Activated CD8-positive, alpha-beta T cell treated with anti-CD3 and anti-CD28 coated beads for 36 hours (primary cell): ENCODE measurements at regions of chr9 and their contacts with region 1.

Region 1: DNA sequence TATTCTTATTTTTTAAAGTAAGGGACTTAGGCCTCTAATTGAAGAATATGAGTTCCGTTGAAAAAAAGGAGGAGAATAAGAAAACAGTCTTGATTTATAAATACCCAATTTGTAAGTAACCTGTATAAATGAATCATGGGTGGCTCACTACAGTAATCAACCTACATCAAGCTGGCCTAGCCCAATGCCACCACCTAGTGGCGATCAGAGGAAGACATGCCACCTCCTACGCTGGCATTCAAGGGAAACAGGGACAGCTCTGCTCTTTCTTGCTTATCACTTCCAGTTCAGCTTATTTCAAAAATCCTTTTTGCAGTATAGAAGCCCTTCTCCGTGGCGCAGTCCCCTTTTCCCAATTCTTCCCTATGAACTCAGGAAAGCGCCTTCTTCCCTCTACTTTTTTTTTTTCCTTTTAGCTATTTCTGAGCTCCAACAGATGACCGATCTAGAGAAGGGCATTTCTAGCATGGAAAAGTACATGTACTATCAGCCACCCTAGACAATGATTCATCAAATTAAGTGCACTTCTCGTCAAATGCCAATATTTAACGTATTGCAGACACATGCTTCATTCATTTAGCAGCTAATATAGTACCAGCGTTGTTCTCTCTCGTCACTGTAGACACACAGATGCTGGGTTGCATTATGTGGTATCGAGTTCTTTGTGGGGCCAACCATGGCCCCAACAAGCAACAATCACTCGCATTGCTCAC is 28.3 kb downstream of the PTPN3 start:
- DNase-seq: peak; percentile 82
- ATAC-seq: peak; percentile 91
- H3K4me3 Mint-ChIP-seq: no peak overlapping the region
- H3K27ac Mint-ChIP-seq: no peak overlapping the region
- H3K4me1 Mint-ChIP-seq: peaks cover 9% of the 10 kb centered on the region
- H3K27me3 Mint-ChIP-seq: peaks cover 4% of the 10 kb centered on the region
- CTCF ChIP-seq: peak; percentile 82

Region 2: GRCh38 chr9:109440797-109441287 is 29.0 kb before region 1 on chr9:
- CTCF ChIA-PET with region 1: interaction called, 76 read pairs
- POLR2A ChIA-PET with region 1: no interaction called
- intact Hi-C with region 1: loop called (anchors 1 kb)
- DNase-seq: peak; percentile 77
- ATAC-seq: peak; percentile 99
- H3K4me3 Mint-ChIP-seq: no peak overlapping the region
- H3K27ac Mint-ChIP-seq: no peak overlapping the region
- H3K4me1 Mint-ChIP-seq: peaks cover 16% of the 10 kb centered on the region
- H3K27me3 Mint-ChIP-seq: peaks cover 22% of the 10 kb centered on the region
- CTCF ChIP-seq: peak; percentile 58

Region 3: DNA sequence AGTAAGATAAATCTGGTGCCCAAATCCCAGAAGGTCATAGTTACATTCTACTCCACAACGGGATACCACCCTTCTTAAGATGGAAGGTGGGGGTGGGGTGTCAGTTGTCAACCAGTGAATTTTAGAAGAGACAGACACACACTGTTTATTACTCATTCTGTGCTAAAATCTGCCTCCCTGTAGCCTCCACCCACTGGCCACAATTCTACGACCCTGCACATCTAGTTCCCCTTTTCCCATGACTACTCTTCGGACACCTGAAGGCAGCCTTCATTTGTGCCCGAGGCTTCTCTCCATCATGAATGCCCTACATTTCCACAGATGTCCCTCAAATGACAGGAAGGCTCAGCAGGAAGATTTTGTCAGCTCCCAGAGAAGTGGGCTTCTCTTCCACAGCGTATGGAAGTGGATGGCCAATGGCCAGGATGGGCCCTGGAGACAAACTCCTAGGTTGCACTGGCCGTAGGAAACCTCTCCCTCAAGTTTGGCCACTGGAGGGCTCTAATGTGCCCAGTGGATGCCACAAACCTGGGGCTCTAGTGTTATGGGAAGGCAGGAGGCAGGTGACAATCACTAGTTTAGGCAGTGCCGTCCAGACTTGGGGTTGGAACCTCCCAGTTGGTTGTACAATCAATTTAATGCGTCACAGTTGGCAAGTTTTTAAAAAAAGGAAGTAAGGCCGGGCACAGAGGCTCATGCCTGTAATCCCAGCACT is 18.3 kb before region 1 on chr9:
- CTCF ChIA-PET with region 1: interaction called, 33 read pairs
- POLR2A ChIA-PET with region 1: no interaction called
- intact Hi-C with region 1: no loop called
- DNase-seq: no peak
- ATAC-seq: no peak
- H3K4me3 Mint-ChIP-seq: no peak overlapping the region
- H3K27ac Mint-ChIP-seq: no peak overlapping the region
- H3K4me1 Mint-ChIP-seq: peaks cover 18% of the 10 kb centered on the region
- H3K27me3 Mint-ChIP-seq: peaks cover 7% of the 10 kb centered on the region
- CTCF ChIP-seq: no peak

Region 4: DNA sequence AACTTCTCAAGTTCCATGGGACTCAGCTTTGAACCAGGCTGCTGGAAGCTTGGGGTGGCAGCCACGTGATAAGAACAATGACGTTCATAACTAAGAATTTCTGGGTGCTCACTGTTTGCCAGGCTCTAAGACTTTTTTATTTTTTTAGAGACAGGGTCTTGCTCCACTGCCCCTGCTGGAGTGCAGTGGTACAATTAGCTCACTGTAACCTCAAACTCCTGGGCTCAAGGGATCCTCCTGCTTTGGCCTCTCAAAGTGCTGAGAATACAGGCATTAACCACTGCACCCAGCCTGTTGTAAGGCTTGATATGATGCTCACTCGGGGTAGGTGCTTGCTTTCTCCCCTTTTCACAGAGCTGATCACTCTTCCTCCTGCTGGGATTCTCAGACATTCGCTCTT is 10.4 kb before region 1 on chr9:
- CTCF ChIA-PET with region 1: interaction called, 17 read pairs
- POLR2A ChIA-PET with region 1: no interaction called
- intact Hi-C with region 1: no loop called
- DNase-seq: no peak
- ATAC-seq: no peak
- H3K4me3 Mint-ChIP-seq: no peak overlapping the region
- H3K27ac Mint-ChIP-seq: no peak overlapping the region
- H3K4me1 Mint-ChIP-seq: peaks cover 5% of the 10 kb centered on the region
- H3K27me3 Mint-ChIP-seq: peaks cover 8% of the 10 kb centered on the region
- CTCF ChIP-seq: no peak